ENCODE measurements at regions of chr2 and their contacts with region 1.

Region 1: GRCh38 chr2:216057688-216058193 is 23.9 kb downstream of the PECR start:
- DNase-seq: peak; percentile 25
- ATAC-seq: peak; percentile 83
- H3K4me3 Mint-ChIP-seq: peak overlapping the region; percentile 84
- H3K27ac Mint-ChIP-seq: peak overlapping the region; percentile 96
- H3K4me1 Mint-ChIP-seq: peaks cover 29% of the 10 kb centered on the region
- H3K27me3 Mint-ChIP-seq: no peaks in the 10 kb centered on the region
- CTCF ChIP-seq: no peak

Region 2: DNA sequence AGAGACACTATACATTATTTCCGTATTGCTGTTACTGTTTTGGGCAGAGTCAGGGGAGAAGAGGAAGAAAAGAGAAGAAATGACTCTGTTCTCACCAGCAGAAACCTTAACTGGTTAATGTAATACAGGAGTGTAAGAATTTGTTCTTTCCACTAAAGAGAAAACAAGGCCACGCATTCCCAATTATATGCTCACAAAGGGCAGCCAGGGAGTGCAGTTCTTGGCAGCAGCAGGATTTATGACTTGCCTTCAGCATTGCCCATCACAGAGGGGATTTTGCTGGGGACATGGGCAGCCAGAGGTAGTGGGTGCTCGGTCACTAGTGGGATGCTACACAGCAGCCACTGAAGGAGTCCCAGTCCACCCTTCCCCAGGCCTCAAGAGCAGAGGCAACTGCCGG is 62.8 kb before region 1 on chr2:
- CTCF ChIA-PET with region 1: no interaction called
- POLR2A ChIA-PET with region 1: no interaction called
- intact Hi-C with region 1: no loop called
- DNase-seq: no peak
- ATAC-seq: no peak
- H3K4me3 Mint-ChIP-seq: no peak overlapping the region
- H3K27ac Mint-ChIP-seq: no peak overlapping the region
- H3K4me1 Mint-ChIP-seq: no peaks in the 10 kb centered on the region
- H3K27me3 Mint-ChIP-seq: no peaks in the 10 kb centered on the region
- CTCF ChIP-seq: no peak

Region 3: DNA sequence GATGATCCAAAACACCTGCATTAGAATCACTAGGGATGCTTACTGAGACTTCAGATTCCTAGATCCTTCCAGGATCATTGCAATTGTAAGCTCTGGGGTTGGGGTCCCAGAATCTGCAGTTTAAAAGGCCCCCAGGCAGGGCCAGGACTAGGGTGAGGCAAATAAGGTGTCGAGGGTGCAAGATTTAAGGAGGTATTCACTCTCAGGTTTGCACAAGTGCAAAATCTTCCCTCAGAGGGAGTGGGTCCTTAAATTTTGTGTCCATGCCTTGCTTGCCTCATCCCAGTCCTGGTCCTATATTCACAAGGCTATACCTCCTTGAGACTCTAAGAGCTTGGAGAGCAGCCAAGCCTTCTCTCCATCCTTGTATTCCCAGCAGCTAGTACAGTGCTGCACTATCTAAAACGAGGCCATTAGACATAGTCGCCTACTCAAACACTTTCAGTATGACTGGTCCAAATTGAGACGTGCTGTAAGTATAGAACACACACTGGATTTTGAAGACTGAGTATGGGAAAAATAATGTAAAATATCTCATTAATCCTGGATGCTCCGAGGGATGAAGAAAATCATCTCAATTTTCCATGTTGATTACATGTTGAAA is 12.8 kb before region 1 on chr2:
- CTCF ChIA-PET with region 1: no interaction called
- POLR2A ChIA-PET with region 1: no interaction called
- intact Hi-C with region 1: no loop called
- DNase-seq: no peak
- ATAC-seq: no peak
- H3K4me3 Mint-ChIP-seq: no peak overlapping the region
- H3K27ac Mint-ChIP-seq: no peak overlapping the region
- H3K4me1 Mint-ChIP-seq: no peaks in the 10 kb centered on the region
- H3K27me3 Mint-ChIP-seq: no peaks in the 10 kb centered on the region
- CTCF ChIP-seq: no peak

Region 4: DNA sequence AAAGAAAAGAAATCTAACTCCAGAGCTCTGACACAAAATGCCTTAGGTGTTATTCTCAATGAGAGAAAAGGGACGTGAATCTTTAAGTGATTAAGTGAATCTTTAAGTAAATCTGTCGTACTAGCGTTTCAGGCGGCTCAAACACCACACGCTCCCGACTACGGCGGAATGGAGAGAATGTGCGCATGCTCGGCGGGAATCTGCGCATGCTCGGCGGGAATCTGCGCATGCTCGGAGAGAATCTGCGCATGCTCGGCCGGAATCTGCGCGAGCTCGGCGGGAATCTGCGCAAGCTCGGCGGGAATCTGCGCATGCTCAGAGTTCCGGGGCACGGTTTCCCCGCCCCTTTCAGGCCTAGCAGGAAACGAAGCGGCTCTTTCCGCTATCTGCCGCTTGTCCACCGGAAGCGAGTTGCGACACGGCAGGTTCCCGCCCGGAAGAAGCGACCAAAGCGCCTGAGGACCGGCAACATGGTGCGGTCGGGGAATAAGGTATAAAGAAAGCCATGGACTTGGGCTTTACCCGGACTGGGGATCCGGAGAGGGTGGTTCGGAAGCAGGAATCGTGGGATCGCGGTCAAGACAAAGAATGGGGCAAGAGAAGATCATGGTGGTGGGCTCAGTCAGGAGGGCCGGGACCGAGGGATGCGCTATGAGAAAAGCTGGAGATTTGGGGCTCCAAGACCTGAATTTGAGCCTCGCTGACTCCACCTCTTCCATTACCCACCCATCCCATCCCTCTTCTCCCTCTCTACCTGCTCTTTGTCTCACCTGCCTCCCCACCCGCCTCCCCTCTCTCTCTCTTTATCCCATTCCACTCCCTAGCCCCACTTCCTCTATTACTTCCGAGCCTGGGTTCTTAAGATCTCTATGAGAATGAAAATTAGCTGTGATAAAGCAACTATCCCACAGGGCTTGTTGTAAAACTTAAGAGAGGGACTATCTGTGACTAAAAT is 51.5 kb after region 1 on chr2 and contains the start of gene XRCC5:
- CTCF ChIA-PET with region 1: interaction called, 4 read pairs
- POLR2A ChIA-PET with region 1: interaction called, 7 read pairs
- intact Hi-C with region 1: loop called (anchors 2 kb)
- DNase-seq: peak; percentile 93
- ATAC-seq: peak; percentile 88
- H3K4me3 Mint-ChIP-seq: peak within 1 kb of the TSS; percentile 99
- H3K27ac Mint-ChIP-seq: peak within 1 kb of the TSS; percentile 99
- H3K4me1 Mint-ChIP-seq: peaks cover 57% of the 10 kb centered on the region
- H3K27me3 Mint-ChIP-seq: no peaks in the 10 kb centered on the region
- CTCF ChIP-seq: no peak
- total RNA-seq, gene XRCC5: 303 and 311 TPM in 2 replicates